Keratinocyte (primary cell): ENCODE measurements at regions of chr1 and their contacts with region 1.

Region 1: DNA sequence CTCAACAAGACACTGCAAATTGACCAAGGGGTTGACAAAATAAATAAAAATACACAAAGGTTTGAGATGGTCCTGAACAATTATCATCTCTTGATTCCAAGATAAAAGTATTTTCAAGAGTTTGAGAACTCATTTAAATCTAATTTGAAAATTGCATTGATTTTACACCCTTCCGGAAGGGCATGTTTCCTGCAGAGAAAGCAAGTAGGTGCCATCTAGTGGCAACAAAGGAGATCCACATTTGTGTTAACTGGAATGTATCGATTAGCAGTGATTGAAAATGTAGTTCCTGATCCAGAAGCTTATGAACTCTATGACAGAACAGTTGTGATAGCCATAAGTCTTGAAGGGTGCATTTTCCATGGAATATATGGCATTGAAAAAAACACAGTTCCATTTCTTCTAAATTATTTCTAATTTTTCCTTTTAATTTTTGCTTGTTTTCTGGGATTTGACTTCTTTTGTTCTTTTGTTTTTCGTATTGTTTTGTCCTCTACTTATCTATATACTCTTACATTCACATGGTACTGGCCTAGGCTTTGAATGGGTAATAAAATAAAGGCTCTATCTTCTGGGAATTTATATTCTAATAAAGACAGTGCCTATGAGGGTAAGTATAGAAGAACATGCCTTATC is 143.7 kb downstream of the DNM3 start:
- DNase-seq: no peak
- H3K4me3 ChIP-seq: no peak overlapping the region
- H3K27ac ChIP-seq: no peak overlapping the region
- H3K4me1 ChIP-seq: no peaks in the 10 kb centered on the region
- H3K27me3 ChIP-seq: no peaks in the 10 kb centered on the region
- CTCF ChIP-seq: peak; percentile 63 to 65 (median 65)

Region 2: GRCh38 chr1:171644805-171645483 is 340.0 kb before region 1 on chr1:
- dilution Hi-C with region 1: loop called (anchors 25 kb)
- DNase-seq: peak; percentile 56
- H3K4me3 ChIP-seq: no peak overlapping the region
- H3K27ac ChIP-seq: no peak overlapping the region
- H3K4me1 ChIP-seq: no peaks in the 10 kb centered on the region
- H3K27me3 ChIP-seq: no peaks in the 10 kb centered on the region
- CTCF ChIP-seq: peak; percentile 83 to 93 (median 91)

Region 3: DNA sequence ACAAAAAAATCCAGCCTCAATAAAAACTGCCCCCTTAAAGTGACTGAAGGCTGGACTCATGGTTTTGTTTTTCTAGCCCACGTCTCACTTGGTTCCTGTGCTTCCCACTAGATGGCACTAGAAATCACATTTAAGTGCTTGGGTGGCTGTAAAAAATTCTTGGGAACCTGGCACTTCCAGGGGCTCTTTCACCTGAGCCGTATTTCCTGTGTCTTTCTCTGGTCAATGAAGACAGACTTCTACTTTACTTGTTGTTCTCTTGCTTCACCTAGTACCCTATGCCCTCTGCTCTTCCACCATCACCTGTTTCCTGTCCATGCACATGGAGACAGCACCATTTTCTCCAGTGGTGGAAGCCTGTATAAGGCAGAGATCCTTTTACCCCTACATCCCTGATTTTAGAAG is 183.5 kb before region 1 on chr1:
- dilution Hi-C with region 1: loop called (anchors 10 kb)
- DNase-seq: no peak
- H3K4me3 ChIP-seq: no peak overlapping the region
- H3K27ac ChIP-seq: no peak overlapping the region
- H3K4me1 ChIP-seq: no peaks in the 10 kb centered on the region
- H3K27me3 ChIP-seq: no peaks in the 10 kb centered on the region
- CTCF ChIP-seq: peak; percentile 62 to 81 (median 78)

Region 4: DNA sequence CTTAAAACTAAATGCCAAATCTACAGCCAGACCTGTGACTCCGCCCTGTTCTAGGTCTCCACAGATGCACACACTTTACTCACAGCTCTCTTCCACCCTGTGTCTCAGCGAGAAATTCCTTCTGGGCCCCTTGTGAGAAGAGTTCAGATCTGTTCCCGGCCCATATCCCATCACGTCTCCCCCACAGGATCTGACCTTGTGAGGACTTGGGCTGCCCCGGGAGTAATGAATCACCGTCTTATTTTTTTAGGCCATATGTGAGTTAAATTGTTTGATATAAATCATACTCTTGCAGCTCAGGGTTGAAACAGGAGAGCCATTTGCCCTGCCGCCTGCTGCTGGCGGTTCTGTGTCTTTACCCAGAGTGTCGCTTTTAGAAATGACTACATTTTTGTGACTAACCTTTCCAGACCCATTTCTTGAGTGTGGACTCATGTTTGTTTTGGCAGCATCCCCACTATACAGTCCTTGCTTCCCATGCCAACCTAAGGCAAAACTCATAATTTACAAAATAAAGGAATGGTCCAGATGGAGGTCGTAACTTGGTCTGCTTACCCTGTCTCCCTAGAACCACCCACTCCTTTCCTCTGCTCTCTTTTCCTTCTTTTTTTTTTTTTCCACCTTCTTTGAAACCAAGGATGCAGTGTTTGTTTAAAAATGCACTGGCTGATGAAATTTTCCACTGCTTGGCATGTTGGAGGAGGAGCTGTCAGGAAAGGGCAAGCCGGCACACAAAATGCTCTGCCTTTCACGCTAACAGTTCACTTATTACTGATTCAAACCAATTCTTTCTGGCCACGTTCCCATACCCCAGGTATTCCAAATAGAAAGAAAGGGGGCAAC is 337.5 kb after region 1 on chr1:
- dilution Hi-C with region 1: no loop called
- DNase-seq: no peak
- H3K4me3 ChIP-seq: peak overlapping the region in 2 of 3 experiments; percentile 35 to 59
- H3K27ac ChIP-seq: peak overlapping the region; percentile 82
- H3K4me1 ChIP-seq: peaks cover 48% of the 10 kb centered on the region
- H3K27me3 ChIP-seq: no peaks in the 10 kb centered on the region
- CTCF ChIP-seq: no peak